PC-3 (cell line): ENCODE measurements at regions of chr14 and their contacts with region 1.

Region 1: GRCh38 chr14:75088574-75089373 is 19.3 kb downstream of the ZC2HC1C start:
- DNase-seq: peak; percentile 84
- ATAC-seq: peak; percentile 78
- H3K4me3 ChIP-seq: no peak overlapping the region
- H3K27ac ChIP-seq: no peak overlapping the region
- H3K4me1 ChIP-seq: no peaks in the 10 kb centered on the region
- H3K27me3 ChIP-seq: no peaks in the 10 kb centered on the region
- CTCF ChIP-seq: peak; percentile 90

Region 2: DNA sequence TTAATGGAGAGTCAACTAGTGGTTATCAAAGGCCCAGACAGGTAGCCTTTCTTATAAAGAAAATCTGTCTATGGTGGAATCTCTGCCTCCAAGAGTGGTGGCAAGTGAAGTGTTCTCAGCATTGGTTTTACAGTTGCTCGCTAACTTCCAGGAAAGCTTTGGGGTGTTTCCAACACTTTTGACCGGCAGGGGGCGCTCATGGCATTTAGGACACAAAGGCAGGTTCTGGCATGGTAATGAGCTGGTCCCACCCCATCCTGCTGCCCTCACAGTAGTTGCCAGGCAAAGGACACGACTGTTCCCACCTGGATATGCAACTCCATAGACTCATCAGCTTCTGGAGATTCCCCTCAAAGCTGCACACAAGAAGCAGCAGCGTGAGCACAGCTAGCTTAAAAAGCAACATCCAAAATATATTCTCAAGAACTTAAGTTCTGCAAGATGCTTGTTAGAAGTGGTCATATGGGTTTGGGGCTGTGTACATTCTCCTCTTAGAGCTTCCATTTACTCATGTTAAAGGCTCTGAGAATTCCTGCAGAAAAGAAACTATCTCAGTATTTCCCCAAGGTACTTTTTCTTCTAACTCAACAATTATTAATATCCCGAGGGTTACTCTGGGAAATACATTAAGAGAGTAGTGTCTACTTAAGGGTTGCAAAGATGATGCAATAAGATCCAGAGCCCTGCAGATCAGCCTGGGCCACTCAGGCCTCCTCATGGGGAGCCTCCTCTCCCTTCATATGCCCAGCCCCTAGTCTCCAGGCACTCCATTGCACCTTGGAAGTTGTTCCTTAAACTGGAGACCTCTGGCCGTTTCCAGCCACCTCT is 227.7 kb before region 1 on chr14:
- CTCF ChIA-PET with region 1: interaction called, 3 read pairs
- POLR2A ChIA-PET with region 1: no interaction called
- intact Hi-C with region 1: loop called (anchors 1 kb)
- DNase-seq: peak; percentile 92
- ATAC-seq: peak; percentile 80
- H3K4me3 ChIP-seq: no peak overlapping the region
- H3K27ac ChIP-seq: no peak overlapping the region
- H3K4me1 ChIP-seq: no peaks in the 10 kb centered on the region
- H3K27me3 ChIP-seq: no peaks in the 10 kb centered on the region
- CTCF ChIP-seq: peak; percentile 90

Region 3: DNA sequence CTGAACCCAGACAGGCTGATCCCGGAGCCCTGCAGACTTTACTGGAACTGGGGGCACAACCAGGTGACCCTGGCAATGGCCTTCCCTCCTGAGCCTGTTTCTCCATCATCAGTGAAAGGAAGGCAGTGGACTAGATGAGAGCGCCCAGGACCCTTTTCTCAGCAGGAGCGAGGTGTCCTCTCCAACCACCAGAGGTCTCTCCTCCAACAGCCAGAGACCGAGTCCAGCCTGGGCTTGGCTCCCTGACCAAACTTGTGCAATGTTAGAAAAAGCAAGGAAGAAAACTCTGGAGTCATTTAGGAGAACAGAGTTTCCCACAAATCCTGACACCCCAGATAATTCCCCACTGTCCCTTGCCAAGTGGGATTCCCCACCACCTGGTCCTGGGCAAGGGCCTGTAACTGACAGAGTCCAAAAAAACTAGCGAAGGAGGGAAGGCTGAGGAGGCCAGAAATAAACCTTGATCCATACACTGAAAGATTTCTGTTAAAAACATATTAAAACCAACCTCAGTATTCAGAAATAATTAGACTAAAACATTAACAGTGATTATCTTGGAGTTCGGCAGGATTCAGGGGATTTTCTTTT is 174.7 kb before region 1 on chr14:
- CTCF ChIA-PET with region 1: interaction called, 5 read pairs
- POLR2A ChIA-PET with region 1: no interaction called
- intact Hi-C with region 1: loop called (anchors 1 kb)
- DNase-seq: peak; percentile 74
- ATAC-seq: peak; percentile 97
- H3K4me3 ChIP-seq: no peak overlapping the region
- H3K27ac ChIP-seq: no peak overlapping the region
- H3K4me1 ChIP-seq: no peaks in the 10 kb centered on the region
- H3K27me3 ChIP-seq: no peaks in the 10 kb centered on the region
- CTCF ChIP-seq: peak; percentile 91

Region 4: DNA sequence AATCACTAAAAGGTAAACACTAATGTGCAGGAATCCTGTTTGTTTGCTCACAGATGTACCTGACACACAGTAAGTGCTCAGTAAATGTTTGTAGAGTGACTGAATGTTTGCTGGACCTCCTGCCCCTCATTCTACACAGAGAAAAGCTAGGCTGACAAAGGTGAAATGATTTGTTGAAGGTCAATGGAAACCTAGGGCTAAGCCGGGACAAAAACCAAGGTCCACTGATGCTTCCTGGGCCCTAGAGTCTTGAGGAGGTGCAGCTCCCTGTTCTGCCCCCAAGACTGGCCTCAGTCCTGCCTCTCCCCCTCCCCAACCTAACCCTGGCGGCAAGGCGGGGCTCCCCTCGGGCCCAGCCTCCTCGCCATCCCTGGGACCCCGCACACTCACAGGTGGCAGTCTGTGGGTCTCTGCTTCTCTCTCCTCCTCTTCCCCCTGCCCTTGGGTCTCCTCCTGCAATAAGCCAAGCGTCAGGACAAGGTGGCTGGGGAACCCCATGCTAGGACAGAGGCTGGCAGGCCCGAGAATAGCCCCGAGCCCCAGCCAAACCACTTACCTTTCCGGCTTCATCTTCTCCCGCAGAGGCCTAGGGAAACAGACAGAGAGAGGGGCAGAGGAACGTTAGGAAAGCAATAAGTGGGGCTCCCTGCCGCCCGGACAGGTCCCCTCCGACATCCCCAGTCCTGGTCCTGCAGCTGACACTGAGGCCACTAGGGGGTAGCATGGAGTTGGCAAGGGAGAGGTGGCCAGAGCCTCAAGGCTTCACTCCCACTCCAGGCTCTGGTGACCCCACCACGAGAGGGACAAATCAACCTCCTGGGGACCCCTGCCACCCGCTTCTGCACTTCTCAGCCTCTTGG is 142.7 kb before region 1 on chr14:
- CTCF ChIA-PET with region 1: interaction called, 5 read pairs
- POLR2A ChIA-PET with region 1: no interaction called
- intact Hi-C with region 1: loop called (anchors 10 kb)
- DNase-seq: peak; percentile 85
- ATAC-seq: peak; percentile 87
- H3K4me3 ChIP-seq: peak overlapping the region; percentile 6; the same call in 1 of the 2 replicates
- H3K27ac ChIP-seq: peak overlapping the region; percentile 71
- H3K4me1 ChIP-seq: peaks cover 15% of the 10 kb centered on the region
- H3K27me3 ChIP-seq: no peaks in the 10 kb centered on the region
- CTCF ChIP-seq: peak; percentile 95

Region 5: GRCh38 chr14:75011356-75011994 is 77.3 kb before region 1 on chr14:
- CTCF ChIA-PET with region 1: no interaction called
- POLR2A ChIA-PET with region 1: no interaction called
- intact Hi-C with region 1: loop called (anchors 5 kb)
- DNase-seq: peak; percentile 48
- ATAC-seq: peak; percentile 90
- H3K4me3 ChIP-seq: no peak overlapping the region
- H3K27ac ChIP-seq: peak overlapping the region; percentile 36
- H3K4me1 ChIP-seq: peaks cover 12% of the 10 kb centered on the region
- H3K27me3 ChIP-seq: no peaks in the 10 kb centered on the region
- CTCF ChIP-seq: no peak

Region 6: GRCh38 chr14:75293920-75294642 is 205.3 kb after region 1 on chr14:
- CTCF ChIA-PET with region 1: no interaction called
- POLR2A ChIA-PET with region 1: no interaction called
- intact Hi-C with region 1: no loop called
- DNase-seq: peak; percentile 97
- ATAC-seq: peak; percentile 90
- H3K4me3 ChIP-seq: peak overlapping the region; percentile 86
- H3K27ac ChIP-seq: peak overlapping the region; percentile 71
- H3K4me1 ChIP-seq: peaks cover 17% of the 10 kb centered on the region
- H3K27me3 ChIP-seq: no peaks in the 10 kb centered on the region
- CTCF ChIP-seq: no peak